Activated CD8-positive, alpha-beta memory T cell treated with anti-CD3 and anti-CD28 coated beads, Interleukin-2, amount 10 ng/mL, durations not matched to agents 7 days and 5 days (primary cell): ENCODE measurements at regions of chr12 and their contacts with region 1.

Region 1: DNA sequence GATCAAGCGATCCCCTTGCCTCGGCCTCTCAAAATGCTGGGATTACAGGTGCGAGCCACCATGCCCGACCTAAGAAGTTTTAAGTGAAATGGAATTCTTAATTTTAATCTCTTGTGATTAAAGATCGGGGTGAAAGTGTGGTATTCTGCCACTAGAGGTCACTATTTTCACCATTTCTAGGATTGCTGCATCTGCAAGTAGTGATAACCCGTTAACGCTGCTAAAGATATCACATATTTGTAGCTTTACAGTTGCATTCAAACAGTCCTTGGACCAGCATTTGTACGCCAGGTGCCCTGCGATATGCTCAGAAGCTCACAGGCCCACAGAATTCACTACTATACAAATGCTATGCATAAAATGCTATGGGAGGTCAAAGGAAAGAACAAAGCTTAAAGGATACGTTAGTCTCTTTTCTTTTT is 19.3 kb downstream of the CCDC62 start:
- DNase-seq: no peak
- ATAC-seq: peak; percentile 71
- H3K4me3 Mint-ChIP-seq: no peak overlapping the region
- H3K27ac Mint-ChIP-seq: no peak overlapping the region
- H3K4me1 Mint-ChIP-seq: peaks cover 5% of the 10 kb centered on the region
- H3K27me3 Mint-ChIP-seq: peaks cover 2% of the 10 kb centered on the region

Region 2: GRCh38 chr12:122807651-122808050 is 14.0 kb after region 1 on chr12:
- CTCF ChIA-PET with region 1: interaction called, 11 read pairs
- DNase-seq: no peak
- ATAC-seq: no peak
- H3K4me3 Mint-ChIP-seq: no peak overlapping the region
- H3K27ac Mint-ChIP-seq: no peak overlapping the region
- H3K4me1 Mint-ChIP-seq: peaks cover 6% of the 10 kb centered on the region
- H3K27me3 Mint-ChIP-seq: no peaks in the 10 kb centered on the region

Region 3: DNA sequence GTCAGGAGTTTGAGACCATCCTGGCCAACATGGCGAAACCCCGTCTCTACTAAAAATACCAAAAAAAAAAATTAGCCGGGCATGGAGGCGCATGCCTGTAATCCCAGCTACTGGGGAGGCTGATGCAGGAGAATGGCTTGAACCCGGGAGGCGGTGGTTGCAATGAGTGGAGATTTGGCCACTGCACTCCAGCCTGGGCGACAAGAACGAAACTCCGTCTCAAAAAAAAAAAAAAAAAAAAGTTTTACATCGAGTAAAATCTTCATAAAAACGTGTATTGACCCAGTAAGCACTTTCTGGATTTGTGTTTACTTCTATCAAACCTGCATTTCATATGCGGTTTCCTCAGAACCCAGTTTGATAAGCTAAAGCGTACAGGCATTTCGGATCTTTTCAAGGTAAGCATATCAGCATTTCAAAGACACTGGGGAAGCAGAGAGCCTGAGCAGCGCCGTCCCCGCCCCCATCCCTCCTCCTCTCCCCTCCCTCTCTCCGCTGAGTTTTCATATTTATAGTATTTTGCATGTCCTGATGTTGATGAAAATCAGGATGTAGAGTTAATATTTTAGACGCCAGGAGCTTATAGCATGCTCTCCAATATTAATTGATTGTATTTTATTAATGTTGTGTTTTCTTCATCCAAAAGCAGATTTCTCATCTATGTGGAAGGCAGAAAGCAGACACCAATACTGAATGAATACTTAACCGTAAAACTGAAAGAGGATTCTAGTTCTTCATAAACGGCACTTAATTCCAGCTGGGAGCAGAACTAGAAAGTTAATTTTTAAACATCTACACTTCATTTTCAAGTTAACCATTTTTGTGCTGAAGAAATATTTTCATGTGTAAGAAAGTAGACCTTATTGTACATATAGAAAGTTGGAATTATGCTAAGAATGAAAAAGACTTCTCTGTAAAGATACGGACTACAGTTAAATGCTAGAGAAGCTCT is 32.4 kb after region 1 on chr12:
- CTCF ChIA-PET with region 1: interaction called, 27 read pairs
- DNase-seq: no peak
- ATAC-seq: no peak
- H3K4me3 Mint-ChIP-seq: no peak overlapping the region
- H3K27ac Mint-ChIP-seq: no peak overlapping the region
- H3K4me1 Mint-ChIP-seq: no peaks in the 10 kb centered on the region
- H3K27me3 Mint-ChIP-seq: peaks cover 34% of the 10 kb centered on the region

Region 4: GRCh38 chr12:122834104-122834920 is 40.6 kb after region 1 on chr12:
- CTCF ChIA-PET with region 1: interaction called, 27 read pairs
- DNase-seq: no peak
- ATAC-seq: no peak
- H3K4me3 Mint-ChIP-seq: peak overlapping the region; percentile 80
- H3K27ac Mint-ChIP-seq: peak overlapping the region; percentile 76
- H3K4me1 Mint-ChIP-seq: peaks cover 23% of the 10 kb centered on the region
- H3K27me3 Mint-ChIP-seq: peaks cover 22% of the 10 kb centered on the region

Region 5: DNA sequence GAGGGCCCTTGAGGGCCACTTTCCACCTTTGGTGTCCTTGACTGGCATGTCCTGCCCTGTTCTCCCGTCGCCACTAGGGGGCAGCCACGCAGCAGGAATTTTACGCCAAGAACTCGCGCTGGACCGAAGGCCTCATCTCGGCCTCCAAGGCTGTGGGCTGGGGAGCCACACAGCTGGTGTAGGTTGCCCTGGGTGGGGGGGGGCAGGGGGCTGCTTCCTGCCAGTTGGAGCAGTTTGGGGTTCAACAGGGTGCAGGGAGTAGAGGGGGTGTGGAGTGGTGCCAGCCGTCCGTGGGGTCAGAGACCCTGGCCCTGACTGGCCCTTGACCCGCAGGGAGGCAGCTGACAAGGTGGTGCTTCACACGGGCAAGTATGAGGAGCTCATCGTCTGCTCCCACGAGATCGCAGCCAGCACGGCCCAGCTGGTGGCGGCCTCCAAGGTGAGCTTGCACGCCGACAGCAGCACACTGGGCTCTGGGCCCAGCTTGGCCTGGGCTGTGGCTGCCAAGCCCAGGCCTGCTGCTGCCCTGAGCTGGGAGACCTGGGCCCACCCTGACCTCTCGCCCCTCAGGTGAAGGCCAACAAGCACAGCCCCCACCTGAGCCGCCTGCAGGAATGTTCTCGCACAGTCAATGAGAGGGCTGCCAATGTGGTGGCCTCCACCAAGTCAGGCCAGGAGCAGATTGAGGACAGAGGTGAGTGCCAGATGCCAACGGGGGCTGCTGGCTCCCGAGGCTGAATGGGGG is 66.8 kb after region 1 on chr12:
- CTCF ChIA-PET with region 1: interaction called, 21 read pairs
- DNase-seq: peak; percentile 87
- ATAC-seq: peak; percentile 74
- H3K4me3 Mint-ChIP-seq: no peak overlapping the region
- H3K27ac Mint-ChIP-seq: no peak overlapping the region
- H3K4me1 Mint-ChIP-seq: no peaks in the 10 kb centered on the region
- H3K27me3 Mint-ChIP-seq: no peaks in the 10 kb centered on the region

Region 6: DNA sequence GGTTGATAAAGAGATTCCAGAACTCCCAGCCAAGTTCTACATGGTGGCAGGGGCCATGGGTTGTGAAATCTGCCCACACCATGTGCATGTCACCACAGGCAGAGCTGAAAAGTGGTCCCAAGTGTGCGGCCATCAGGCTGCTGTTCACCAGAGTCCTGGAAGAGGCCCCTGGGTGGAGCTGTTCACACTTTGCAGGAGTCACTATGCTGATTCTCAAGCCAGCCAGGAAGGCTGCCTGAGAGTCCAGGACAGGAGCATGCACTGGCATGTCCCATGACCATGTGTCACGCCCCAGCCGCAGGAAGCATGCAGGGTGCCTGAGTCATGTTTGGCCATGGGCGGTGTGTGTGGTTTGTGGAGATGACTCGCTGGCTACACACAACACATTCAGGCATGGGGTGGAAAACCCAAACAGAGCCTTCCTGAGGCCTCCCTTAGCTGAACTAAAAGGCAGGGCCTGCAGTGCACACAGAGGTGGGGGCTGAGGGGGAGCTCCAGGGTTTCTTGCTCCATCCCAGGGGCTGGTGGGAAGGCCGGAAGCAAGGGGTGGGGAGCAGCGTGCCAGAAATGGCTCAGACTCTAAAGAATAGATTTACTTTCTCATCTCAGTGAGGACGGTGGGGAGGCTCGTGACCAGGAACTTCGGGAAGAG is 153.1 kb after region 1 on chr12:
- CTCF ChIA-PET with region 1: interaction called, 44 read pairs
- DNase-seq: peak; percentile 94
- ATAC-seq: peak; percentile 90
- H3K4me3 Mint-ChIP-seq: no peak overlapping the region
- H3K27ac Mint-ChIP-seq: peak overlapping the region; percentile 74
- H3K4me1 Mint-ChIP-seq: peaks cover 41% of the 10 kb centered on the region
- H3K27me3 Mint-ChIP-seq: no peaks in the 10 kb centered on the region

Region 7: DNA sequence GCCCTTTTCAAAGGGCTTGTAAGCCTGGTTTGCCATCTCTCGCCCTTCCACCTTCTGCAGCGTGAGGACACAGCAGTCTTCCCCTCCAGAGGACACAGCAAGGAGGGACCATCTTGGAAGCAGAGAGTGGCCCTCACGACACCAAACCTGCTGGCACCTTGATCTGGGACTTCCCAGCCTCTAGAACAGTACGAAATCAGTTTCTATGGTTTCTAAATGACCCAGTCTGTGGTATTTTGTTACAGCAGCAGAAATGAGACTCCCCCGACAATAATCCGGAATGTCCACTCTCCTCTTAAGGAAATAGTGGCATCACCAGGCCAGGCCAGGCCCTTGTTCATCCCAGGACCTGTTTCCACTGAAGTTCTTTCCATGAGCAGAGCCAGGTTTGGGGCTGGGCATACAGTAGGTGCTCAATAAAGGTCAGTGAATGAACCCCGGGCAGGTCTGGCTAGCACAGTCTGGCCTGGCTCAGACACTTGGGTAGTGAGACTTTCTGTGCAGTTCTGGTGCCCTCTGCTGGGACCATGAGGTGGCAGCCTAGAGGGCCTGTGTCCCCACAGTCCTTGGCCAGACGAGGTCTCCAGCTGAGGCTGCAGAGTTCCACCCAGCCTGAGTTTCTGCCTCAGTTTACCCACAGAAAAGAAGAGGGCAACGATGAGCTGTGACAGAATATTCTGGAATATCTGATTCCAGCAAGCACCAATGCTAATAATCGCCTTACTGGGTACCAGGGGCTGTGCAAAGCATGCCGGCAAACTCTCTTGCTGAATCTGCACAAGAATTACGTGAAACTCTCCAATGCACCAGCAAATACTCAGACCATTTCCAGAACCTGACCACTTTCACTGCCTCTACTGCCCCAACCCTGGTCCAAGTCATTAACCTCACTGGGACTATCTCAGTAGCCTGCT is 158.5 kb after region 1 on chr12:
- CTCF ChIA-PET with region 1: interaction called, 44 read pairs
- DNase-seq: peak; percentile 86
- ATAC-seq: peak; percentile 99
- H3K4me3 Mint-ChIP-seq: no peak overlapping the region
- H3K27ac Mint-ChIP-seq: peak overlapping the region; percentile 40
- H3K4me1 Mint-ChIP-seq: peaks cover 16% of the 10 kb centered on the region
- H3K27me3 Mint-ChIP-seq: no peaks in the 10 kb centered on the region